ENCODE measurements at regions of chr2 and their contacts with region 1.

Region 1: DNA sequence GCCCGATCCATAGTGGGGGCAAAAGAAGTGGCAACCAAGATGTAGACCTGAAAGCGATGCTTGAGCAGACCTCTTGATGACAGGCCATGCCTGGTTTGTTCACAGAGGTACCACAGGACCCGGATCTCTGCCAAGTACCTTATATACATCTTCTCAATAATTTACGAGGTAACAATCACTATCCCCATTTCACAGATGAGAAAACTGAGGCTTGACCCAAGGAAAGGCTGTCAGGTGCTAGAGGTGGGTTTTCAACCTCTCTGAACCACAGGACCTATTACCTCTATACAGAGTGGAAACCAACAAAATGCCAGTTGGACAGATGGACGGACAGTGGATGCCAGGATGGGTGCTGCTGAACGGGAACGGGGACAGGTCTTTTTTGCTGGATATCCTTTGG is 13.8 kb upstream of the DIS3L2 start:
- DNase-seq: no peak
- ATAC-seq: no peak
- H3K4me3 ChIP-seq: no peak overlapping the region
- H3K27ac ChIP-seq: no peak overlapping the region
- H3K4me1 ChIP-seq: no peaks in the 10 kb centered on the region
- H3K27me3 ChIP-seq: peaks cover 0 to 5% (median 0%) of the 10 kb centered on the region in 3 donors
- CTCF ChIP-seq: no peak

Region 2: DNA sequence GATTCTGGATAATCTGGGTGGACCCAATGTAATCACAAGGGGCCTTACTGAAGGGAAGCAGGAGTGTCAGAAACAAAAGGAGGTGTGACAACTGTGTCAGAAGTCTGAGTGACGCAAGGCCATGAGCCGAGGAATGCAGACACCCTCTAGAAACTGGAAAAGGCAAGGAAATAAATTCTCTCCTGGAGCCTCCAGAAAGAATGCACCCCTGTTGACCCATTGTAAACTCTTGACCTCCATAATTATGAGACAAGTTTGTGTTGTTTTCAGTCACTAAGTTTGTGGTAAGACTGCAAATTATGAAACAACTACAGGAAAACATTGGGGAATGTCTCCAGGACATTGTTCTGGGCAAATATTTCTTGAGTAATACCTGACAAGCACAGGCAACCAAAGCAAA is 599.5 kb before region 1 on chr2:
- intact Hi-C with region 1: no loop called
- DNase-seq: no peak
- ATAC-seq: no peak
- H3K4me3 ChIP-seq: no peak overlapping the region
- H3K27ac ChIP-seq: no peak overlapping the region
- H3K4me1 ChIP-seq: no peaks in the 10 kb centered on the region
- H3K27me3 ChIP-seq: no peaks in the 10 kb centered on the region
- CTCF ChIP-seq: no peak

Region 3: DNA sequence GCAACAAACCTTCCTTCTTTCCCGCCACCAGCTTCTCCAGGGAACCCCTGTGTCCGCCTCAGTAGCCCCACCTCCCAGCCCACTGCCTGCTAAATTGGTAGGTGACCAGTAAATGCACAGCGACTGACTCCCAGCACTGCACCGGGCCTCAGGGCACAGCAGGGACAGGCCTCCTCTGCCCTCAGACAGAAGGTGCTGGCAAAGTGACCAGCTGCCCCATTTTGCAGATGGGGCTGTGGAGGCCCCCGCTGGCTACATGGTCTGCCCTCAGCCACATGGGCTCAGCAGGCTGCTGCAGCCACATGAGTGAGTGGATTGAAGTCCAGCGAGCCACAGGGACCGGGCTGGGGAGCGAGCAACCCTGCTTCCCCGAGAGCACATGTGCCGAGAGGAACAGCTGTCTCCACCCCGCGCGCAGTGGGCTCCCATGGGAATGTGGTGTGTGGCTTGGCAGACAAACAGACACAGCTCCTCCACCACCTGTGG is 13.7 kb before region 1 on chr2:
- intact Hi-C with region 1: loop called in 1 of 2 experiments (anchors 1 kb)
- DNase-seq: peak; percentile 68 to 83
- ATAC-seq: peak in 3 of 4 donors; percentile 16 to 49 (median 36)
- H3K4me3 ChIP-seq: no peak overlapping the region
- H3K27ac ChIP-seq: no peak overlapping the region
- H3K4me1 ChIP-seq: no peaks in the 10 kb centered on the region
- H3K27me3 ChIP-seq: peaks cover 0 to 13% (median 0%) of the 10 kb centered on the region in 3 donors
- CTCF ChIP-seq: no peak

Measured in psoas muscle (tissue), 8 donors.